Heart right ventricle (tissue), 16 donors: ENCODE measurements at regions of chr7 and their contacts with region 1.

Region 1: DNA sequence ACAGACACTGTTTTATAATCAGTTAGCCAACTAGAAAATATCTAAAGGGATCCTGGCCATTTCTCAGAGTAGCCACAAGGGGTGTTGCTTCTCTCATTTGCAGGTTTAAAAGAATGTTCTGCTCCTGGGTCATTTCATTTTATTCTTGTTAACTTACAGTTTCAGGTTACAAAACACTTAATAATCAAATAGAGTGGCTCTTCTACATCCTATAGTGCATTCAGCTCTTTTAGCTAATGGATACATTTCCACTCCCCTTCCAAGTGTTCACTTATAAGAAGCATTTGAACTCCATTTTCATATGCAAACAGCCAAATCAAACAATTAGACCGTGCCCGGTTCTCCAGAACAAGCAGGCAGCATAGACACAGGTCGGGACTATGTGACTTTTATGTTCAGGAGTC is 117.5 kb downstream of the TRIL start:
- DNase-seq: no peak
- ATAC-seq: no peak
- H3K4me3 ChIP-seq: no peak overlapping the region
- H3K27ac ChIP-seq: no peak overlapping the region
- H3K4me1 ChIP-seq: peaks cover 0 to 9% (median 0%) of the 10 kb centered on the region in 9 donors
- H3K27me3 ChIP-seq: no peaks in the 10 kb centered on the region
- CTCF ChIP-seq: peak in 7 of 9 donors; percentile 29 to 47 (median 39)

Region 2: DNA sequence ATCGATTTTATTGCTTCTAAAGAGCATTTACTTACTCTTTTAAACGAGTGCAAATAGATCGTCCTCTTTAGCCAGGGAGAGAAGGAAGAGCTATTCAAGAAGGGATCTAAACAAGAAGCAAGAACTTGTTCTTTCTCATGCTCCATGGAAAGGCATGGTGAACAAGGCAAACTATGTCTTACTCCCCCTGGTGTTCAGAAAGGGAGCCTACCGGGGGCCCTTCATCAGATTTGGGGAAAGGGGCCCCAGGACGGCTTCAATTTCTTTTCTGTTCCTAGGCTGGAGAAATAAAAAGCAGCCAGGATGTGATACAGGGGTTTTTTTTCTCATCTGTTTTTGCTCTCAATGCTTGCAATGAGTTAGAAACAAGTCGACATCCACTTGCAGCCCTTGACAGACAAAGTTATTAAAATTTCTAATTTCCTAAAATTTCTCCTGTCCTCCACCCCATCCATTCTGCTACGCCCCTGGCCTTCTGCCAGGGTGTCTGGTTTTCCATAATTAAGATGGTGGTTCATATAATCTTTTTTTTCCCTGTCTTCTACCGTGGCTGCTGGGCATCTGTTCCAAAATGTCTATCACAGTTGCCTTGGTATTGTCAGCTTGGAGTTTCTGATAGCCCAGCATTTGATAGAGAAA is 213.9 kb before region 1 on chr7:
- intact Hi-C with region 1: loop called in 1 of 10 experiments (anchors 10 kb)
- DNase-seq: no peak
- ATAC-seq: peak in 1 of 8 donors; percentile 46
- H3K4me3 ChIP-seq: no peak overlapping the region
- H3K27ac ChIP-seq: peak overlapping the region in 5 of 10 donors; percentile 0 to 63 (median 1)
- H3K4me1 ChIP-seq: peaks cover 0 to 84% (median 42%) of the 10 kb centered on the region in 9 donors
- H3K27me3 ChIP-seq: no peaks in the 10 kb centered on the region
- CTCF ChIP-seq: peak; percentile 28 to 79 (median 71)

Region 3: DNA sequence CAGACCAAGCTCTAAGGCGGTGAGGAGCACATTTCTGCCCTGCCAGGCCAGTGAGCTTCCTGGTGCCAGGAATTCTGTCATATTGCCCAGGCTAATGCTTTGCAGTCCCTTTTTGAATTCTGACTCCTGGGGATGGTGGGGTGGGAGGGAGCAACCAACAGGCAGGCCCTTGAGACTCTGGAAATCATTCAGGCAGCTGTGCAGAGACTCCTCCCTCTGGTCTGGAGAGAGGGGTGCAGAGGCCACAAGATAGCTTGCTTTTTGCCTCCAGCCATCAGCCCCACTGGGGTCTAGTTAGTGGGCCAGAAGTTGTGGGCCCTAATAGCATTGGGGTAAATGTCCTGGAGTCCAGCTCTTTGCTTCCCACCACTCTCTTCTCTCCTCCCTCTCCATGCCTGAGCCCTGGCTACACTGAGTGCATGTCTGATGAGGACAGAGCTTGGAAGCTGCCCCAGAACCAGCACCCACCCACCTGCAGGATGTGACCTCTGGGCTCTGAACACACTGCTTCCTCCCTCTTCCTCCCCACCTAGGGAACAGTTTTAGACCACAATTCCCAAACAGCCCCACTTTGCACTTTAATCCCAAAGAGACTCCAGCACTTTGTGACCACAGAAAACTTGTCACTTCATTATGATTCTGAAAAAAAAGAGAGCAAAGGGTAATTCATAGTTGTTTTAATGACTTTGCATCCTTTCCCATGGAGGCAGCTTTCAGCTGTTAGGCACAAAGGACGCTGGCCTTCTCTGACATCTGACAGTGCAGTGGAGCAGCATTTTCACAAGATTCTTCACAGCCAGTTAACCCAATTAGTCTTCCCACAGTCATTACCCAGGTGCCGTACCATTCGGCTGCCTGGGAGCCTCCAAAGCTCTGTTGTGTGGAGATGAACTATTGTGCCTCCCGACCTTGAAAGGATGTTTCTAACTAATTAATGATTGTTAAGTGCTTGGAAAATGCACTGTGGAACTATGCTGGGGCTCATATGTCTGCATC is 145.0 kb before region 1 on chr7:
- intact Hi-C with region 1: loop called in 1 of 10 experiments (anchors 10 kb)
- DNase-seq: peak in 1 of 2 donors; percentile 62
- ATAC-seq: peak; percentile 75 to 94 (median 88)
- H3K4me3 ChIP-seq: no peak overlapping the region
- H3K27ac ChIP-seq: peak overlapping the region in 9 of 10 donors; percentile 43 to 73 (median 64)
- H3K4me1 ChIP-seq: peaks cover 11 to 63% (median 45%) of the 10 kb centered on the region in 9 donors
- H3K27me3 ChIP-seq: no peaks in the 10 kb centered on the region
- CTCF ChIP-seq: no peak

Region 4: DNA sequence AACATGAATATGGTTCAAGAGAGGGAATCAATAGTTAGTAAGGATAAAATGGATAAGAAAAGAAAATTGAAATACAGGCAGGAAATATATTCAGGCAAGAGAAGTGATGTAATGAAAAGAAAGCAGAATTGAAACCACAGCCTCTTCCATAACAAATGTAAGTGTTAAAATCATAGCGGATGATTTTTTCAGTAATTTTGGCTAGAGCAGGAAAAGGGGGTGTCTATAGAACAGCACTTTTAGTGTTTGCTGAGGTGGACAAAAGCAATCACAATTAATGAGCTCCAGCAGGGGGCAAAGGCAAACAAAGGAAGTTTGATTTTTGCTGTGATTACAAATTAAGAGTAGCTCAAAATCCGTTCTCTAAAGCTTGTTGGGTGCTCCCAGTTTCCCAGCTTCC is 38.5 kb after region 1 on chr7:
- intact Hi-C with region 1: no loop called
- DNase-seq: no peak
- ATAC-seq: no peak
- H3K4me3 ChIP-seq: no peak overlapping the region
- H3K27ac ChIP-seq: no peak overlapping the region
- H3K4me1 ChIP-seq: peaks cover 0 to 7% (median 0%) of the 10 kb centered on the region in 9 donors
- H3K27me3 ChIP-seq: peaks cover 0 to 27% (median 16%) of the 10 kb centered on the region in 7 donors
- CTCF ChIP-seq: no peak

Region 5: DNA sequence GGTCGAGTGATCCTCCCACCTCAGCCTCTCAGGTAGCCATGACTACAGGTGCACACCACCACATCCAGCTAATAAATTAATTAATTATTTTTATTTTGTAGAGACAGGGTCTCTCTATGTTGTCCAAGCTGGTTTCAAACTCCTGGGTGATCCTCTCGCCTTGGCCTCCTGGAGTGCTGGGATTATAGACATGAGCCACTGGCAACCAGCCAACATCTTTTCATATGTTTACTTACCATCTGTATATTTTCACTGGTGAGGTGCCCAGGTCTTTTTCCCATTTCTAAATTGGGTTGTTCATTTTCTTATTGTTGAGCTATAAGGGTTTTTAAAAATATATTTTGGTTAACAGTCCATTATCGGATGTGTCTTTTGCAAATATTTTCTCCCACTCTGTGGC is 216.5 kb after region 1 on chr7:
- intact Hi-C with region 1: no loop called
- DNase-seq: no peak
- ATAC-seq: no peak
- H3K4me3 ChIP-seq: no peak overlapping the region
- H3K27ac ChIP-seq: no peak overlapping the region
- H3K4me1 ChIP-seq: no peaks in the 10 kb centered on the region
- H3K27me3 ChIP-seq: no peaks in the 10 kb centered on the region
- CTCF ChIP-seq: no peak